ENCODE measurements at regions of chr12 and their contacts with region 1.

Region 1: GRCh38 chr12:116561181-116561821 is 2.1 kb downstream of the MAP1LC3B2 start:
- DNase-seq: no peak
- H3K4me3 ChIP-seq: no peak overlapping the region
- H3K27ac ChIP-seq: no peak overlapping the region
- H3K4me1 ChIP-seq: peaks cover 26% of the 10 kb centered on the region
- H3K27me3 ChIP-seq: no peaks in the 10 kb centered on the region
- CTCF ChIP-seq: no peak
- POLR2A ChIP-seq: no peak

Region 2: GRCh38 chr12:115934046-115934445 is 627.3 kb before region 1 on chr12:
- intact Hi-C with region 1: loop called (anchors 5 kb)
- DNase-seq: peak in 1 of 2 donors; percentile 7
- H3K4me3 ChIP-seq: no peak overlapping the region
- H3K27ac ChIP-seq: no peak overlapping the region
- H3K4me1 ChIP-seq: no peaks in the 10 kb centered on the region
- H3K27me3 ChIP-seq: no peaks in the 10 kb centered on the region
- CTCF ChIP-seq: no peak
- POLR2A ChIP-seq: no peak

Region 3: GRCh38 chr12:116599285-116600136 is 38.2 kb after region 1 on chr12:
- intact Hi-C with region 1: no loop called
- DNase-seq: peak in 1 of 2 donors; percentile 93
- H3K4me3 ChIP-seq: peak overlapping the region; percentile 18 to 22
- H3K27ac ChIP-seq: peak overlapping the region; percentile 80
- H3K4me1 ChIP-seq: peaks cover 46% of the 10 kb centered on the region
- H3K27me3 ChIP-seq: no peaks in the 10 kb centered on the region
- CTCF ChIP-seq: peak in 2 of 3 experiments; percentile 42 to 64
- POLR2A ChIP-seq: no peak